Dorsolateral prefrontal cortex (tissue), 120 donors: ENCODE measurements at regions of chr11 and their contacts with region 1.

Region 1: DNA sequence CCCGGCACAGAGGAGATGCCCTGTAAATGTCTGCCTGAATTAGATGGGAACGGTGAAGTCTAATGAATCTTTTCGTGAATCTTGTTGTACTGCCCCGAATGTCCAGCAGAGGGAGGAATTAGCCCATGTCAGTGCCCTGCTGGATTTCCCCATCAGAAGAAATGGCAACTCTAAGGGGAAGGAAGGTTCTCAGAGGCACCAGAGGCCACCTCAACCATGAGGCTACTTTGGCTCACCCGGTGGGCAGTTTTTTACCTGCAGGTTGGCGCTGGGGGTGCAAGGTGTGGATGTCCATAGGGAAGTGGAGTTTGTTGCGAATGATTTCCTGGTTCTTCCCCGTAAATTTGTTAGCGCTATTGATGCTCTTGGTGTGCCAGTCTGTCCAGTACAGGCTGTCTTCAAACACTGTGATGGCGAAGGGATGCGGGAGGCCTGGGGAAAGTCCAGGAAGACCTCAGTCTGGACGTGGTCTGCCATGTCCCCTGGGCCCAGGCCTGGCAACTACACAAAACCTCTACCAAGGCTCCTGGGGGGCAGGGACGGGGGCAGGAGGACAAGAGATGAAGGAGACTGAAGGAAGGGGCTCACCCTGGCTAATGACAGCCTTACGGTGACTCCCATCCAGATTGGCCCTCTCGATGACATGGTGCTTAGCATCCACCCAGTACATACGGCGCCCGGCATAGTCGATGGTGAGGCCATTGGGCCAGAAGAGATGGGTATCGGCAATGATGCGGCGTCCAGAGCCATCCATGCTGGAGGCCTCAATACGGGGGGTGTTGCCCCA is 28.5 kb downstream of the LRP4 start:
- DNase-seq: peak in 8 of 10 donors; percentile 55 to 88 (median 71)
- H3K4me3 ChIP-seq: no peak overlapping the region
- H3K27ac ChIP-seq: peak overlapping the region in 32 of 59 donors; percentile 1 to 60 (median 34)
- H3K27me3 ChIP-seq: no peaks in the 10 kb centered on the region
- CTCF ChIP-seq: peak; percentile 74 to 96 (median 92)

Region 2: GRCh38 chr11:46835897-46836296 is 54.0 kb before region 1 on chr11:
- intact Hi-C with region 1: no loop called
- DNase-seq: no peak
- H3K4me3 ChIP-seq: no peak overlapping the region
- H3K27ac ChIP-seq: no peak overlapping the region
- H3K27me3 ChIP-seq: no peaks in the 10 kb centered on the region
- CTCF ChIP-seq: no peak

Region 3: GRCh38 chr11:46977038-46977813 is 87.3 kb after region 1 on chr11:
- intact Hi-C with region 1: no loop called
- DNase-seq: peak; percentile 20 to 81 (median 54)
- H3K4me3 ChIP-seq: peak overlapping the region in 40 of 59 donors; percentile 0 to 53 (median 21)
- H3K27ac ChIP-seq: peak overlapping the region; percentile 41 to 97 (median 88)
- H3K27me3 ChIP-seq: no peaks in the 10 kb centered on the region
- CTCF ChIP-seq: peak in 1 of 56 donors; percentile 12

Region 4: GRCh38 chr11:47136327-47136726 is 246.4 kb after region 1 on chr11:
- intact Hi-C with region 1: no loop called
- DNase-seq: no peak
- H3K4me3 ChIP-seq: no peak overlapping the region
- H3K27ac ChIP-seq: peak overlapping the region in 2 of 59 donors; percentile 48 to 53
- H3K27me3 ChIP-seq: no peaks in the 10 kb centered on the region
- CTCF ChIP-seq: no peak

Region 5: GRCh38 chr11:47152953-47153950 is 263.4 kb after region 1 on chr11:
- intact Hi-C with region 1: loop called (anchors 2 kb)
- DNase-seq: peak; percentile 78 to 93 (median 86)
- H3K4me3 ChIP-seq: no peak overlapping the region
- H3K27ac ChIP-seq: peak overlapping the region in 56 of 59 donors; percentile 6 to 88 (median 61)
- H3K27me3 ChIP-seq: no peaks in the 10 kb centered on the region
- CTCF ChIP-seq: peak; percentile 84 to 99 (median 95)

Region 6: DNA sequence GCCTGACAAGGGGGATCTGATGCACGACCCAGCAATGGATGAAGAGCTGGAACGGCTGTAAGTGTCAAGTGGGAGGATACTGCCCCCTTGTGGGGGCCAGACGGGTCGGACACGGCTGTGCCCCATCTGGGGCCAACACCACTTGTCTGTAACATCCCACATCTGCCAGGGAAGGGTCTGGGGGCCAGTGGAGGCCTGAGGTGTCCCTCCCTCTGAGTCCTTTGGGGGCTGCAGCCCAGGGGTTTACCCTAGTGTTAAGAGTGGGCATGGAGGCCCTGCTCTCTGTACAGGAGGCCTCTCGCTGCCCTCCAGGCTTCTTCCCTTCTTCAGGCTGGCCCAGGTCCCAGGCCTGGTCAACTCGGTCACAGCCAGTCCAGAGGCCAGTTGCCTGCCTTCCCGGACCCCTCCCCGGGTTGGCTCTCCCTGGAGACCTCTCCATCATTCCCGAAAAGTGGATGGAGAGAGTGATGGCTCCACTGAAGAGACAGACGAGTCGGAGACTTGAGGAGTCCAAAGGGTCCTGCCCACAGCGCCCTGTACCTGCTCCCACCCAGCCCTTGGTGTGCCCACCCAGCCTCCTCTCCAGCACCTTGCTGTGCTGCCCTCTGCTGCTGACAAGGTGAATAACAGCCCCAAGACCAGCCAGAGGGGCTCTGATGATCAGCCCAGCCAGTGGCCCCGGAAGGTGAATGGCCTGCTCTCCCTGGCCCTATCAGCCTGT is 271.4 kb after region 1 on chr11:
- intact Hi-C with region 1: loop called in 1 of 2 experiments (anchors 2 kb)
- DNase-seq: peak in 8 of 10 donors; percentile 55 to 77 (median 68)
- H3K4me3 ChIP-seq: no peak overlapping the region
- H3K27ac ChIP-seq: peak overlapping the region in 49 of 59 donors; percentile 5 to 89 (median 53)
- H3K27me3 ChIP-seq: no peaks in the 10 kb centered on the region
- CTCF ChIP-seq: peak; percentile 45 to 79 (median 69)

Region 7: GRCh38 chr11:47355283-47356128 is 465.6 kb after region 1 on chr11:
- intact Hi-C with region 1: loop called in 1 of 2 experiments (anchors 10 kb)
- DNase-seq: peak; percentile 88 to 94 (median 92)
- H3K4me3 ChIP-seq: peak overlapping the region; percentile 49 to 80 (median 65)
- H3K27ac ChIP-seq: peak overlapping the region in 40 of 59 donors; percentile 16 to 83 (median 62)
- H3K27me3 ChIP-seq: no peaks in the 10 kb centered on the region
- CTCF ChIP-seq: peak; percentile 36 to 98 (median 90)